Pancreas (tissue), 10 donors: ENCODE measurements at regions of chr11 and their contacts with region 1.

Region 1: GRCh38 chr11:36672813-36673450 is 74.9 kb upstream of the RAG2 start:
- DNase-seq: no peak
- ATAC-seq: peak in 2 of 4 donors; percentile 64 to 68
- H3K4me3 ChIP-seq: no peak overlapping the region
- H3K27ac ChIP-seq: no peak overlapping the region
- H3K4me1 ChIP-seq: no peaks in the 10 kb centered on the region
- H3K27me3 ChIP-seq: no peaks in the 10 kb centered on the region
- CTCF ChIP-seq: peak; percentile 73 to 95 (median 82)

Region 2: GRCh38 chr11:36586543-36586942 is 86.4 kb before region 1 on chr11:
- intact Hi-C with region 1: loop called in 1 of 3 experiments (anchors 10 kb)
- DNase-seq: no peak
- ATAC-seq: no peak
- H3K4me3 ChIP-seq: no peak overlapping the region
- H3K27ac ChIP-seq: no peak overlapping the region
- H3K4me1 ChIP-seq: no peaks in the 10 kb centered on the region
- H3K27me3 ChIP-seq: peaks cover 0 to 7% (median 0%) of the 10 kb centered on the region in 4 donors
- CTCF ChIP-seq: no peak